ENCODE measurements at regions of chr5 and their contacts with region 1.

Region 1: GRCh38 chr5:64603676-64604075 is 86.6 kb upstream of the SHISAL2B start:
- DNase-seq: no peak
- ATAC-seq: no peak
- H3K4me3 ChIP-seq: no peak overlapping the region
- H3K27ac ChIP-seq: no peak overlapping the region
- H3K4me1 ChIP-seq: no peaks in the 10 kb centered on the region
- H3K27me3 ChIP-seq: no peaks in the 10 kb centered on the region
- CTCF ChIP-seq: no peak
- EP300 ChIP-seq: no peak
- POLR2A ChIP-seq: no peak
- RAD21 ChIP-seq: no peak

Region 2: DNA sequence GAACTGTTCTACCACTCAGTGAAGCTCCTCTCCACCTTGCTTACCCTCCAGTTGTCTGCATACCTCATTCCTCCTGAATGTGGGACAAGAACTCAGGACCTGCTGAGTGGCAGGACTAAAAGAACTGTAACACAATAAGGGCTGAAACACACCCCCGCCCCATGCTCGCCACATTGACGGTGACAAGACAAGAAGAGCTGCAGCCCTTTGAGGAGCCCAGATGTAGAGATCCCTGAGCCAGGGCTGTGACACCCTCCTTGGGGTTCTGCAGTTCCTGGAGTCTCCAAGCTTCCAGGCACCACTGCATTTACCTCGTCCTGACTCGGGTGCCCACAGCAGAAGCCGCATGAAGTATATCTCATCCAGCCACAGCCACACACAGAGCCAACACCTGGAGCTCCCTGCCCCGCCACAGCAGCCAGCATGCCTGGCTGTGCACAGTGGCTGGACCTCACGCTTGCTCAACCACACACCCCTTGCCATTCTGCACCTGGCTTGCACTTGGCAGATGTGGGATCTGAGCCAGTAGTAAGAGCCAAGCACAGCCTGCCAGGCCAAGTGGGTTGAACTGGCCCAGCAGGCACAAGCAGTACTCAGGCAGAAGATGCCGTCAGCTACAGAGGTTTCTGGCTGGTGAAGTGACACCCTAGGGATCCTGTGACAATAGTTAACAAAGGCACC is 271.9 kb before region 1 on chr5:
- CTCF ChIA-PET with region 1: no interaction called
- POLR2A ChIA-PET with region 1: no interaction called
- RAD21 ChIA-PET with region 1: no interaction called
- SMC1A ChIA-PET with region 1: no interaction called
- in situ Hi-C with region 1: no loop called
- intact Hi-C with region 1: loop called (anchors 5 kb)
- DNase-seq: no peak
- ATAC-seq: no peak
- H3K4me3 ChIP-seq: no peak overlapping the region
- H3K27ac ChIP-seq: no peak overlapping the region
- H3K4me1 ChIP-seq: no peaks in the 10 kb centered on the region
- H3K27me3 ChIP-seq: no peaks in the 10 kb centered on the region
- CTCF ChIP-seq: no peak
- EP300 ChIP-seq: no peak
- POLR2A ChIP-seq: no peak
- RAD21 ChIP-seq: no peak

Region 3: GRCh38 chr5:64417390-64417789 is 186.3 kb before region 1 on chr5:
- CTCF ChIA-PET with region 1: no interaction called
- POLR2A ChIA-PET with region 1: no interaction called
- RAD21 ChIA-PET with region 1: no interaction called
- SMC1A ChIA-PET with region 1: no interaction called
- in situ Hi-C with region 1: no loop called
- intact Hi-C with region 1: no loop called
- DNase-seq: no peak
- ATAC-seq: peak; percentile 30; the same call in 1 of the 3 replicates
- H3K4me3 ChIP-seq: no peak overlapping the region
- H3K27ac ChIP-seq: no peak overlapping the region
- H3K4me1 ChIP-seq: no peaks in the 10 kb centered on the region
- H3K27me3 ChIP-seq: no peaks in the 10 kb centered on the region
- CTCF ChIP-seq: no peak
- EP300 ChIP-seq: no peak
- POLR2A ChIP-seq: no peak
- RAD21 ChIP-seq: no peak

Region 4: DNA sequence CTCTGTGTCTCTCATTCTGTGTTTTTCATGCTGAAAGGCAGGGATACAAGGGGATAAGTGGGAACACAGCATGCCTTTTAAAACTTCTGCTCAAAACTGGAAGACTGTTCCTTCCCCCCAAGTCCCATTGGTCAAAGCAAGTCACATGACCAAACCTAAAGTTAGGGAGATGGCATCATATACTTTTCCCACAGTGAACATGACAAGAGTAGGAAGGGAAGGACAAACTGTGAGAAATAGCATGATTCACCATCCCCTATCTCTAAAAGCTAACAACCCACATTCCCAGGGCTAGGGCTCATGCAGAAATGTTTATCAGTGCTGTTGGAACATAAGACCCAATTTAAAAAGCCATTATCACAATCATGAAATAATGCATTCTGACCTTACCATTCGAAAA is 62.4 kb after region 1 on chr5:
- CTCF ChIA-PET with region 1: no interaction called
- POLR2A ChIA-PET with region 1: no interaction called
- RAD21 ChIA-PET with region 1: no interaction called
- SMC1A ChIA-PET with region 1: no interaction called
- in situ Hi-C with region 1: no loop called
- intact Hi-C with region 1: loop called (anchors 10 kb)
- DNase-seq: no peak
- ATAC-seq: no peak
- H3K4me3 ChIP-seq: no peak overlapping the region
- H3K27ac ChIP-seq: no peak overlapping the region
- H3K4me1 ChIP-seq: no peaks in the 10 kb centered on the region
- H3K27me3 ChIP-seq: peaks cover 0 to 2% of the 10 kb centered on the region in 2 experiments; a peak in 2 of 4 replicates
- CTCF ChIP-seq: no peak
- EP300 ChIP-seq: no peak
- POLR2A ChIP-seq: no peak
- RAD21 ChIP-seq: no peak